ENCODE measurements at regions of chr11 and their contacts with region 1.

Region 1: GRCh38 chr11:6682936-6683861 is at the start of gene MRPL17:
- DNase-seq: peak; percentile 100
- H3K4me3 Mint-ChIP-seq: peak within 1 kb of the TSS; percentile 86
- H3K27ac Mint-ChIP-seq: peak within 1 kb of the TSS; percentile 97
- H3K4me1 Mint-ChIP-seq: peaks cover 26% of the 10 kb centered on the region
- H3K27me3 Mint-ChIP-seq: peaks cover 2% of the 10 kb centered on the region
- total RNA-seq, gene MRPL17: 135 and 146 TPM in 2 replicates

Region 2: DNA sequence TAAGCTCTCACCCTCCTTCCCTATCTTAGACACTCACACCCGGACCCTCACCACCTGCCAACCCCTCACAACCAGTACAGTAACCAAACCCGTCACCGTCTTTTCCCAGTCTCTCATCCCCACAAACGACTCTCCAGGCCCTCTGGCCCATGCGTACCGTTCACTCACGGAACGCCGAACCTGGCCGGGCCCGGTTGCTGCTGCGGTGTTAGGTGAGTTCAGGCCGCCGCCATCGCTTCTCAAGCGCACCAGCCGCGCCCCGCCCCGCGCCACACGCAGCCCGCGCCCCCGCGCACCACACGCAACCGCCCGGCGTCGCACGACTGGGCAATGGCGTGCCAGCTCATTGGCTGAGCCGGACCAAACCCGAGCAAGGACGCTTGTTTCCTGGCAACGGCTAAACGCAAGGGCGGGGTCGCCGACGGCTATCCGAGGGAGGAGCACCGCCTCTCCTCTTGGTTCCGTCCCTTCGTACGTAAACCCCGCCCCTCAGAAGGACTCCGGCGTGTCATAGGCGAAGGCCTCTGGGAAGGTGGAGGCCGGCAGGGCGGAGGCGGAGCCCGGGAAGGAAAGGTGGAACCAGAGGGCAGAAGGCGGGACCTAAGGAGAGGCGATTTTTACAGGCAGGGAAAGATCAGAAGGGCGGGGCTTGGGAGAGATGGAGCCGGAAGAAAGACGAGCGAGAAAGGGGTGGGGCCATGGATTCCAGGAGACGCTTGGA is 448.7 kb before region 1 on chr11 and contains the start of gene FHIP1B:
- intact Hi-C with region 1: loop called (anchors 2 kb)
- DNase-seq: peak; percentile 100
- H3K4me3 Mint-ChIP-seq: peak within 1 kb of the TSS; percentile 95
- H3K27ac Mint-ChIP-seq: peak within 1 kb of the TSS; percentile 90
- H3K4me1 Mint-ChIP-seq: peaks cover 35% of the 10 kb centered on the region
- H3K27me3 Mint-ChIP-seq: peaks cover 1% of the 10 kb centered on the region
- total RNA-seq, gene FHIP1B: 19.3 and 20.2 TPM in 2 replicates

Region 3: DNA sequence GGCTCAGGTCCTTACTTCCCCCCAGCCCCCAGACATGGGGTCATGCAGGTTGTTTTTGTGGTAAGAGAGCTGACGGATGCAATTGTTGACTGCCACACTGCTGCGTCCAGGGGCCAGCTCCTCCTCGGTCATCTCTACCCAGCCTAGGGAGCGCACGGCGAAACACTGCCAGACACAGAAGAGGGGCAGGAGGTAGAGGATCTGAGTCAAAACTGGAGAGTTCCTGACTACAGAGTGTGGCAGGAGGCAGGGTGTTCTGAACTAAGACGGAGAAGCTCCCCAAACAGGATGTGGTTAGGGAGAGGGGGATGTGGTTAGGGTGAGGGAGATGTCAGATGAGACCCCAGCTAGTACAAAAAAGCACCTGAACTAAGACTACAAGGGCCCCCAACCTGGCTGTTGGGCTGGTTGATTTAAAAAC is 280.6 kb before region 1 on chr11:
- intact Hi-C with region 1: loop called (anchors 5 kb)
- DNase-seq: peak; percentile 95
- H3K4me3 Mint-ChIP-seq: peak overlapping the region; percentile 85
- H3K27ac Mint-ChIP-seq: peak overlapping the region; percentile 96
- H3K4me1 Mint-ChIP-seq: peaks cover 57% of the 10 kb centered on the region
- H3K27me3 Mint-ChIP-seq: no peaks in the 10 kb centered on the region

Region 4: GRCh38 chr11:6531267-6531752 is 151.9 kb before region 1 on chr11:
- intact Hi-C with region 1: loop called (anchors 1 kb)
- DNase-seq: peak; percentile 83
- H3K4me3 Mint-ChIP-seq: no peak overlapping the region
- H3K27ac Mint-ChIP-seq: no peak overlapping the region
- H3K4me1 Mint-ChIP-seq: peaks cover 15% of the 10 kb centered on the region
- H3K27me3 Mint-ChIP-seq: no peaks in the 10 kb centered on the region

Region 5: DNA sequence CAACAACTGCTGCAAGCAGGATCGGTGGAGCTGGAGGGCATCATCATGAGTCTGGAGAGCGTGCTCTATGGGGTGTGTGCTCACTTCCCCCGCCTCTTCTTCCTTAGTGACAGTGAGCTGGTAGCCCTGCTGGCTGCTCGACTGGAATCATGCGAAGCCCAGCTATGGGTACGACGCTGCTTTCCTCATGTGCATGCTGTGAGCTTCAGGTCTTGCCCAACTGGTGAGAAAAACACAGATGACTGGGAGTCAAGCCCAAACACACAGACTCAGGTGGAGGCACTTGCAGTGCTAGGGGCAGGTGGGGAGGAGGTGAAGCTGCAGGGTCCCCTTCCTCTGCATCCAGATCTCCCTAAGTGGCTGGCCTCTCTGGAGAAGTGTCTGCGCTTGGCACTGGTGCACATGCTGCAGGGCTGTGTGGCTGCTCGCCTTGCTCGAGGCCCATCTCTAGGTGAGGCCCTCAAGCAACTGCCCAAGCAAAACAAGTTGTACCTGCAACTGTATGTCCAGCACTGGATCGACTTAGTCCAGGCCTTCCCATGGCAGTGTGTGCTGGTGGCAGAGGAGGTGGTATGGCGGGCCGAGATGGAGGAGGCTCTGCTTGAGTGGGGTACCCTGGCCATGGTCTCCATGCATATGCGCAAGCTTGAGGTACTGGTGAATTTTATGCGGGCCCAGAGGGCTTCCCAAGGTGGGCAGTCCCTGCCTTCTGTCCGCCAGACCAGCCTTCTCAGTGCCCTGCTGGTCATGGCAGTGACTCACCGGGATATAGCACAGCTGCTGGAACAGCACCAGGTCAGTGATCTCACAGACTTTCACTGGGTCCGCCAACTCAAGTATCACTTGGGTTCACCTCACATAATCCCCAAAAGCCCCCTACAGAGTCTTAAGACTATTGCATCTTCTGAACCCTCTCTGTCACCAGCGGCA is 138.0 kb before region 1 on chr11:
- intact Hi-C with region 1: no loop called
- DNase-seq: no peak
- H3K4me3 Mint-ChIP-seq: no peak overlapping the region
- H3K27ac Mint-ChIP-seq: no peak overlapping the region
- H3K4me1 Mint-ChIP-seq: peaks cover 14% of the 10 kb centered on the region
- H3K27me3 Mint-ChIP-seq: no peaks in the 10 kb centered on the region

Region 6: DNA sequence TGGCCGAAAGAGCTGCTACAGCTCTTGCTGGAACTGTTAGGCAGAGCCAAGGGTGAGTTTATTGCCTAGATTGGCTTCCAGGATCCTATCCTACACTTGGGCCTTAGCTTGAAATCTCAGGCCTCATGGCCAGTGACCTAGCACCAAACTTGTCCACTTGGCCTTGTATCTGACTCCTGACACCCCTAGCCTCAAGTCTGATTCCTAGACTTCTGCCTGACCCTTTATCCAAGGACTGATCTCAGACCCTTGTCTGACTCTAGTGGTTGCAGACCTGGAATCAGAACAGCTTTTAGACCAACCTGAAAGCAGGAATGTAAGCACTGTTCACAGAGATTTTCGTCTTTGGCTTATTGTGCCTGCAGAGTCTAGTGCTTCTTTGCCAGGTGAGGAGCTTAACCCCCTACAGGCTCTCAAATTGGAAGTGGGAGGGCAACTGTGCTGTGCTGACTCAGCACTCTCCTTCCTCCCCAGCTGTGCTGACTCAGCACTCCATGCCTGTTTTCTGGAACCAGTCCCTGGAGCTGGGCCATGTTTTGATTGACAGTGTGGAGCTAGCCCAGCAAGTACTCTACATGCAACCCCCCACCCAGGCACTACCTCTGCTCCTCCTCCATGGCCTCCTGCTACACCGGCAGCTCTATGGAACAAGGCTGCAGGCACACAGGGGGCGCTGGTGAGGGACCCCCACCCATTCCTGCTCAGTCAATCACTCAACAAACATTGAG is 114.8 kb before region 1 on chr11:
- intact Hi-C with region 1: no loop called
- DNase-seq: peak; percentile 52
- H3K4me3 Mint-ChIP-seq: no peak overlapping the region
- H3K27ac Mint-ChIP-seq: no peak overlapping the region
- H3K4me1 Mint-ChIP-seq: peaks cover 8% of the 10 kb centered on the region
- H3K27me3 Mint-ChIP-seq: no peaks in the 10 kb centered on the region

Region 7: DNA sequence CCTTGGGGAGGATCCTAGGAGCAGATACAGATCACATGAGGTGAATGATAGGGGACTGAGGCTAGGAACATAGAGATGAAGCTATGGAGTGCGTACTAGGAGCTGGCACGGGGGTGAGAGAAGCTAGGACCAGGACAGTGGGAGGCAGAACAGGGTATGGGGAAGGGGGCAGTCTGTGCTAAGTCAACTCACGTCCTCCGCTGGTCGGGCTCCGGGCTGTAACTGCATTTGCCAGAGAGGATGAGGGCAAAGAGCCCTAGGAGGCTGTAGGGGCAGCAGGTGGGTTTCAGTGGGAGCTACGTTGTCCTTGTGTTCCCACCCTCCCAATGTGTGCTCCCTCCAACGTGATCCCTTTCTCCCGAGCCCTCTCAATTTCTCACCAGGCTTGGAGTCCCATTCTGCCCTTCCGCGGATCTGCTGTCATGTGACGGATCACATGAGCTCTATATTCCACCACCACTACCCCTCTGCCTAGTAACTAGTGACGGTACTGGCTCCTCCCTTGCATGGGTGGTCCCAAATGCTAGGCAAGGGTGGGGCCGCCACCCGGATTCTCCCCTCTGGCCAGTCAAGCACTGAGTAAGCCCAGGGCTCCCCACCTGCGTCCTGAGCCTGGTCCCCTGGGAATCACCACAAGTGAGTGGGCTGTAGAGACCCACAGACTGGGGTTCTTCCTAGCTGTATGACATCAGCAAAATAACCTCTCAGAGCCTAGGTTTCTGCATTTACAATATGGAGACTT is 64.0 kb before region 1 on chr11 and contains the start of gene TPP1:
- intact Hi-C with region 1: loop called (anchors 1 kb)
- DNase-seq: peak; percentile 98
- H3K4me3 Mint-ChIP-seq: no peak within 1 kb of the TSS
- H3K27ac Mint-ChIP-seq: no peak within 1 kb of the TSS
- H3K4me1 Mint-ChIP-seq: peaks cover 3% of the 10 kb centered on the region
- H3K27me3 Mint-ChIP-seq: no peaks in the 10 kb centered on the region
- total RNA-seq, gene TPP1: 32.2 and 35.2 TPM in 2 replicates

Region 8: GRCh38 chr11:7986768-7987559 is 1303.8 kb after region 1 on chr11 and contains the start of gene EIF3F:
- intact Hi-C with region 1: loop called (anchors 2 kb)
- DNase-seq: peak; percentile 97
- H3K4me3 Mint-ChIP-seq: peak within 1 kb of the TSS; percentile 95
- H3K27ac Mint-ChIP-seq: peak within 1 kb of the TSS; percentile 95
- H3K4me1 Mint-ChIP-seq: peaks cover 23% of the 10 kb centered on the region
- H3K27me3 Mint-ChIP-seq: no peaks in the 10 kb centered on the region
- total RNA-seq, gene EIF3F: 224 and 226 TPM in 2 replicates